ENCODE measurements at regions of chr12 and their contacts with region 1.

Region 1: GRCh38 chr12:466039-466438 is 6.3 kb downstream of the B4GALNT3 start:
- DNase-seq: no peak
- ATAC-seq: no peak
- H3K4me3 ChIP-seq: no peak overlapping the region
- H3K27ac ChIP-seq: no peak overlapping the region
- H3K4me1 ChIP-seq: peaks cover 2% of the 10 kb centered on the region; the same call in 1 of the 2 replicates
- H3K27me3 ChIP-seq: no peaks in the 10 kb centered on the region
- CTCF ChIP-seq: no peak

Region 2: DNA sequence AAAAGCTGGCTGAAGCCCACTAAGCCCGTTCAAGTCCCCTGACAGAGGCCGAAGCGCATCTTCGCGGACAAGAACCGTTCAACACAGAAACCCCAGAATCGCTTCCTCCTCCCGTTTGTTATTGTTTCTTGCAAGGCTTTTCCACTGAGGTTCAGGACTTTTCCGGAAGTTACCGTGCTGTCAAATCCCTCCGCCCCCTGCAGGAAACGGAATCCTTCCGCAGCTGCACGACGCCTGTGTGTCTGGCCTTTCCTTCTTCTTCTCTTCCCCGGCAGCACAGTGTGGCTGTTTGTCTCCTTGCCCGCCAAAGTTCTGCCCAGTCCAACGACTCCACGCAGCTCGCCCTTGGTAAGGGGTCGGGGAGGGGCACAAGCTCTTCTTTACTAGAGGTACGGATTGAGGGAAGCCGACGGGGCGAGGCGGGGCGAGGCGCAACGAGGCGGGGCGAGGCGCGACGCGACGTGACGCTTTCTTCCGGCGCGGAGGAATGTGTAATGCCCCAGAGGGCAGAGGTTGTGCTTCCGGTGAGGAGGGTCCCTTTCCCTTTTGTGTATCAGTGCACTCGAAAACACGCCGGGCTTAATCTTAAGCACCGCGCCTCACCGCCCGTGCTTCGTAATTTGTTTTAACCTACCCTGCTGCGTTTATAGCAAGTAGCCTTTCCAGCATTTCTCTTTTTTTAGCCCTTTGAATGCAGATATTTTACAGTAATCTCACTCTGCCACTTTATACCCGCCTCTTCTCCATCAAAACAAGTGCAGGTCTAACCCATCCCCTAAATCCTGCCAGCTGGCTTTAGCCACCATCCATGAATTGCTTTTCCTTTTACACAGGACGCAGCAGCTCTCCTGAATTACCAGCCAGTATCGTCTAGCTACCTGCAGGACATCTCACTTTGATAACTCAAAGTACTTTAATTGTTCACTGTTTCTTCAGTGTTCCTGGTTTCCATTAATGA is 76.6 kb before region 1 on chr12 and contains the start of gene KDM5A:
- CTCF ChIA-PET with region 1: no interaction called
- POLR2A ChIA-PET with region 1: no interaction called
- in situ Hi-C with region 1: no loop called
- intact Hi-C with region 1: no loop called
- DNase-seq: peak; percentile 68
- ATAC-seq: peak; percentile 98
- H3K4me3 ChIP-seq: peak within 1 kb of the TSS; percentile 70 to 90
- H3K27ac ChIP-seq: peak within 1 kb of the TSS; percentile 94
- H3K4me1 ChIP-seq: peaks cover 5% of the 10 kb centered on the region; the same call in 1 of the 2 replicates
- H3K27me3 ChIP-seq: no peaks in the 10 kb centered on the region
- CTCF ChIP-seq: no peak
- total RNA-seq, gene KDM5A: 49.0 TPM

Region 3: DNA sequence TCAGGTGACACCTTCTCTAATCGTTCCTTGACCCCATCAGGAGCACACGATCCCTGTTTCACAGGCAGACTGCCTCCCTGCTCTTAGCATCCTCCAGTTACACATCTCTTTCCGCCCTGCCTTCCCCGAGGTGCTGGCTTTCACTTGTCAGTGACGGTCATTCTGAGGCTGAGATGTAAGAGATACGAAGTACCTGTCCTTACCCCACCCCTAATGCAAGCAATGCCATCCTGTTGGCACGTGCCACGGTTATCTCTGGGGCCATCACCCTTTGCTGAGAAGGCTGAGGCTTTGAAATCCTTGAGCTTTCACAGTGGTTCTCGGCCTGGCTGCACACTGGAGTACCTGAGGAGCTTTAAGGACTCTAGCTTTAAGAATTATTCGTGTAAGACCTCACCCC is 18.1 kb after region 1 on chr12:
- CTCF ChIA-PET with region 1: interaction called, 12 read pairs
- POLR2A ChIA-PET with region 1: no interaction called
- in situ Hi-C with region 1: no loop called
- intact Hi-C with region 1: no loop called
- DNase-seq: no peak
- ATAC-seq: no peak
- H3K4me3 ChIP-seq: no peak overlapping the region
- H3K27ac ChIP-seq: no peak overlapping the region
- H3K4me1 ChIP-seq: no peaks in the 10 kb centered on the region
- H3K27me3 ChIP-seq: no peaks in the 10 kb centered on the region
- CTCF ChIP-seq: no peak

Region 4: GRCh38 chr12:510071-510825 is 44.2 kb after region 1 on chr12:
- CTCF ChIA-PET with region 1: no interaction called
- POLR2A ChIA-PET with region 1: no interaction called
- in situ Hi-C with region 1: no loop called
- intact Hi-C with region 1: no loop called
- DNase-seq: no peak
- ATAC-seq: peak; percentile 76
- H3K4me3 ChIP-seq: no peak overlapping the region
- H3K27ac ChIP-seq: no peak overlapping the region
- H3K4me1 ChIP-seq: peaks cover 5% of the 10 kb centered on the region; the same call in 1 of the 2 replicates
- H3K27me3 ChIP-seq: no peaks in the 10 kb centered on the region
- CTCF ChIP-seq: no peak

Region 5: DNA sequence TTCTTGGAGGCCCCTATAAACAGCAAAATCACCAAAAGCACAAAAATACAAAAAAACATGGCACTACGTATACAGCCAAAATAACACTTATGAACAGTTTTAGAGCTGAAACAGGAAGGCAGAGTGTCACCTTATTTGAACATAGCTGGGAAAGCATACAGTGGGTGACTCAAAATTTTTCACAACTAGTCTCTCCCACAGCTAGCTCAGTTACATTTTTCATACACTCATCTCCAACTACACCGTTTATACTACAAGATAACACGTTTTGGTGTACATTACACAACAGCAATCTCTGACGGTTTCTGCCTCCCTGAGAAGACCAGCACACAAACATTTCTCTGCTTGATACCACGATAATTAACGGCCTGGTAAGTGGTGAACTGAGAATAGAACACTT is 480.6 kb after region 1 on chr12:
- CTCF ChIA-PET with region 1: no interaction called
- POLR2A ChIA-PET with region 1: no interaction called
- in situ Hi-C with region 1: no loop called
- intact Hi-C with region 1: no loop called
- DNase-seq: no peak
- ATAC-seq: no peak
- H3K4me3 ChIP-seq: no peak overlapping the region
- H3K27ac ChIP-seq: no peak overlapping the region
- H3K4me1 ChIP-seq: peaks cover 7% of the 10 kb centered on the region; the same call in 1 of the 2 replicates
- H3K27me3 ChIP-seq: no peaks in the 10 kb centered on the region
- CTCF ChIP-seq: no peak

Measured in Panc1 (cell line).